Mammary epithelial cell (primary cell): ENCODE measurements at regions of chr12 and their contacts with region 1.

Region 1: DNA sequence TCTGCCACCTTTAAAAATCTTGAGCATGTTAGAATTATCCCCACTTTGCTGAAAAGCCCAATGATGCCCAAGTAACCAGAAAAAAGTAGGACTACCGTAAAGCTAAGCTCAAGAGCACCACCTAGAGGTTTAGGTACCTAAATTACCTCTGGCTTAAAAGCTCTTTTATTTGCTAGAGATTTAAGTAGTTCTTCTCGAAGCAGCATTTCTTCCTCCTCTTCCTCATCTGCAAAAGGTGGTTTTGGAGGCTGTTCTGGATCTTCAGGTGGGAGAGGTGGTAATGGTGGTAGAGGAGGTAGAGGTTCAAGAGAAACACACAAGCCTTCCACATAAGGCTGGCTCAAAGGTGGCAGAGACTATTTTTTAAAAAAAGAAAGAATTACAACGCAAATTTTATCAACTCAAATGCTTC is 26.9 kb downstream of the ZFC3H1 start:
- DNase-seq: peak; percentile 46
- H3K4me3 ChIP-seq: no peak overlapping the region
- H3K27ac ChIP-seq: no peak overlapping the region
- H3K4me1 ChIP-seq: no peaks in the 10 kb centered on the region
- H3K27me3 ChIP-seq: no peaks in the 10 kb centered on the region
- CTCF ChIP-seq: peak; percentile 77 to 81

Region 2: DNA sequence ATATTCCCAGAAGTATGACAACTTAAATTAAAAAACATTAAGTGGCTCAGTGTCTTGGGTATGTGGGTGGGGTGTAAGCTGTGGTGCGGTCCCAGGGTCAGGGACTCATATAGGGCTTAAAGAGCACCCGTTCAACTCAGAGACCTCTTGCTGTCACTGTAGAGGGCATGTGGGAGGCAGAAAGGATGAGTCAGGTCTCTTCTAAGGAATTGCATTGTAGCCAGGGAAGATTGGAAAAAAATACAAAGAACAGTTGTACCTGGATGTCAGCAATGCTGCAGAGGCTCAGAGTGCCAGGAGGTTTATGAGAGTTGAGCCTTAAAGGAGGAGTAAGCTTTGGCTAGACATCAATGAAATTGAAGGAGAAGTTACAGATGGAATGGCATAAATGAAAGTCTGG is 1707.6 kb before region 1 on chr12:
- CTCF ChIA-PET with region 1: interaction called, 29 read pairs
- dilution Hi-C with region 1: no loop called
- in situ Hi-C with region 1: no loop called
- intact Hi-C with region 1: no loop called
- DNase-seq: peak; percentile 81
- H3K4me3 ChIP-seq: no peak overlapping the region
- H3K27ac ChIP-seq: peak overlapping the region; percentile 71
- H3K4me1 ChIP-seq: peaks cover 15% of the 10 kb centered on the region
- H3K27me3 ChIP-seq: no peaks in the 10 kb centered on the region
- CTCF ChIP-seq: no peak

Region 3: DNA sequence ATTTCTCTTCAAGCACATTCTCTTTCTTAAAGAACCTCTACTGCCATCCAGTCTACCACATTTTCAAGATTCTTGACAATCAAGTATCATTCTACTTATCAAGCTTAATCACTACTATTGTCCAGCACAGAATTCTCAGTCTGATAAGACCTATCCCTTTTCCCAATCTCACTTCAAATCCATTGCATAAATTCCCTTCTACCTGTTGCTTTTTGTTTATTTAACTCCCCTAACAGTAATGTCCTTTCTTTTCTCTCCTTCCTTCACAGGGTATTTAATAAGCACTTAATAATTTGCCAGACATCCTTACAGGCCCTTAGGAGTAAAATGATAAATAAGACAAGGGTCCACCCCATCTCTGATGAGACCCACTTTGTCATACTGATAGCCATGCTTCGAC is 14.8 kb before region 1 on chr12:
- CTCF ChIA-PET with region 1: interaction called, 5 read pairs
- dilution Hi-C with region 1: no loop called
- in situ Hi-C with region 1: no loop called
- intact Hi-C with region 1: loop called (anchors 2 kb)
- DNase-seq: no peak
- H3K4me3 ChIP-seq: no peak overlapping the region
- H3K27ac ChIP-seq: no peak overlapping the region
- H3K4me1 ChIP-seq: no peaks in the 10 kb centered on the region
- H3K27me3 ChIP-seq: no peaks in the 10 kb centered on the region
- CTCF ChIP-seq: no peak

Region 4: GRCh38 chr12:71731751-71732712 is 95.3 kb after region 1 on chr12:
- CTCF ChIA-PET with region 1: no interaction called
- dilution Hi-C with region 1: no loop called
- in situ Hi-C with region 1: no loop called
- intact Hi-C with region 1: no loop called
- DNase-seq: no peak
- H3K4me3 ChIP-seq: no peak overlapping the region
- H3K27ac ChIP-seq: no peak overlapping the region
- H3K4me1 ChIP-seq: no peaks in the 10 kb centered on the region
- H3K27me3 ChIP-seq: no peaks in the 10 kb centered on the region
- CTCF ChIP-seq: no peak